ENCODE measurements at regions of chr18 and their contacts with region 1.

Region 1: GRCh38 chr18:75070625-75071483 is 138.1 kb downstream of the PTGR3 start:
- DNase-seq: peak; percentile 91

Region 2: DNA sequence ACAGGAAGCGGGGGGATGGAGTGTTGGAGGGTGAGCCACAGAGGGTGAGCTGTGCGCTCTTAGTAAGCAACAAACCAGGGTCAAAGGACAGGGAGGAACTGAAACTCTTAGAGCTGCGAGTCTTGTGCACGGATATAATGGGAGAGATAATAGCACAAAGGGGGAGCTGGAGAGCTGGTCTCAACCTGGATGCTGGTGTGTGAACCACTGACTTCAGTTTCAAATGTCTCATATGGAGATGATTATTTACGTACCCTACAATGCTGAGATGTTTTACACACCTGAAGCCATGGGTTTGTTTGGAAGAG is 102.2 kb after region 1 on chr18:
- intact Hi-C with region 1: loop called (anchors 5 kb)
- DNase-seq: no peak

Measured in cardiac septum (tissue), 1 donor.